Esophagus squamous epithelium (tissue), 5 donors: ENCODE measurements at regions of chr21 and their contacts with region 1.

Region 1: DNA sequence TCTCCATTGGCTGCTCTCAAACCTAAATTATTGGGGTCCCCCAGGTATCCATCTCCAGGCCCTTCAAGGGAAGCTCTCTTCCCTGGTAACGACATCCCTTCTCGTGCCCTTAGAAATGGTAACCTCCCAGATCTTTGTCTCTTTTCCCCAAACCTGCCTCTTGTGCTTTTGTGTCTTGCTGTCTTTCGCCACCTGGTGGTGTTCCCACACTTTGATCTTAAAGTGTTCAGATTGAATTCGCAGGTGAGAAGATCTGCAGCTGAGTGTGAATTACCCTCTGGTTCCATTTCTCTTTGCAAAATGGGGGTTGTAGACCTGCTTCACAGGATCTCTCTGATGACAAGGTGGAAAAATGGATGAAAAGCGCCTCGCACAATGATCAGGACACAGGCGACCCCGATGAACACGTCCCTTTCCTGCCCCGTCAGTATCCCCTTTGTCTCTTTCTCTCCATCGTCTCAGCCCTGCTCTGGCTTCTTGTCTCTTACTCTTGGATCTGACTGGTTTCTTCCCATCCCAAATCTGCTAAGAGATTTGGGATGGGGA is 53.1 kb downstream of the DOP1B start:
- DNase-seq: no peak
- H3K4me3 ChIP-seq: no peak overlapping the region
- H3K27ac ChIP-seq: peak overlapping the region; percentile 80 to 87 (median 82)
- H3K4me1 ChIP-seq: peaks cover 0 to 19% (median 3%) of the 10 kb centered on the region in 3 donors
- H3K27me3 ChIP-seq: no peaks in the 10 kb centered on the region
- CTCF ChIP-seq: peak; percentile 40 to 86 (median 76)
- POLR2A ChIP-seq: no peak

Region 2: DNA sequence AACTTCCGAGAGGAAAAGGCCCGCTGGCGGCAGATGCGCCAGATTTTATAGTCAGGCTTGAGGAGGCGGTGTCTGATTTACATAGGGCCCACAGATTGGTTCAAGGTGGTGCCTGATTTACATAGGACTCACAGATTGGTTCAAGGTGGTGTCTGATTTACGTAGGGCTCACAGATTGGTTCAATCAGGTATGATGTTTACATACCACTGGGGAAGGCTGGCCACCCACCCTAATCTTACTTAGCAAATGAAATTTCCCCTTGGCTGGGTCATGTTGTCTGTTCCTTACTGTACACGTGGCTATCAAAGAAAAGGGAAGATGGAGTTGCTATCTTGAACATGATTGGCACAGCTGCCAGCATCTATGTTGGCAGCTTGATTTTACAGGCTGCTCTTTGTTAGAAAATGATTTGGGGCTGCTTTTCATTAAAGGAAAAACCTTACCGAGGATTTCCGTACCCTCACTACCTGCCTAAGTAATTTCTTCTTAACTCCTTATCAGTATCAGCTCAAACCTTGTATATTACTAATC is 245.7 kb before region 1 on chr21:
- intact Hi-C with region 1: no loop called
- DNase-seq: no peak
- H3K4me3 ChIP-seq: no peak overlapping the region
- H3K27ac ChIP-seq: no peak overlapping the region
- H3K4me1 ChIP-seq: no peaks in the 10 kb centered on the region
- H3K27me3 ChIP-seq: peaks cover 0 to 14% (median 0%) of the 10 kb centered on the region in 4 donors
- CTCF ChIP-seq: no peak
- POLR2A ChIP-seq: no peak

Region 3: DNA sequence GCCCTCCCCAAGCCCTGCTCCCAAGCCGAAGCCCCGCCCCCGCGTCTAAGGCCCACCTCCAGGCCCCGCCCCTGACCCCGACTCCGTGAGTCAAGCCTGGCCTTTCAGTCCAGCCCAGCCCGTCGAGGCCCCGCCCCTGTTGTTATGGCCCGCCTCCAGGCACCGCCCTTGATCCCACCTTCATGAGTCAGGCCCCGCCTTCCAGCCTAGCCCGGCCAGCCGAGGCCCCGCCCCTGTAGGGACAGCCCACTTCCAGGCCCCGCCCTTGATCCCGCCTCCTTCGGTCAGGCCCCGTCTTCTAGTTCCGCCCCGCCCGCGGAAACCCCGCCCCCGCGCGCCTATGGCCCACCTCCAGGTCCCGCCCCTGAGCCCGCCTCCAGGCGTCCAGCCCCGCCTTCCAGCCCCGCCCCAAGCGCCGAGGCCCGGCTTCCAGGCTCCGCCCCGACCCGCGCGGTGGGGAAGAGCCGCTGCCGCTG is 53.3 kb before region 1 on chr21:
- intact Hi-C with region 1: loop called (anchors 10 kb)
- DNase-seq: peak; percentile 95
- H3K4me3 ChIP-seq: peak overlapping the region; percentile 69 to 97 (median 85)
- H3K27ac ChIP-seq: peak overlapping the region; percentile 91 to 95 (median 94)
- H3K4me1 ChIP-seq: peaks cover 0 to 44% (median 12%) of the 10 kb centered on the region in 3 donors
- H3K27me3 ChIP-seq: no peaks in the 10 kb centered on the region
- CTCF ChIP-seq: no peak
- POLR2A ChIP-seq: no peak